ENCODE measurements at regions of chr13 and their contacts with region 1.

Region 1: DNA sequence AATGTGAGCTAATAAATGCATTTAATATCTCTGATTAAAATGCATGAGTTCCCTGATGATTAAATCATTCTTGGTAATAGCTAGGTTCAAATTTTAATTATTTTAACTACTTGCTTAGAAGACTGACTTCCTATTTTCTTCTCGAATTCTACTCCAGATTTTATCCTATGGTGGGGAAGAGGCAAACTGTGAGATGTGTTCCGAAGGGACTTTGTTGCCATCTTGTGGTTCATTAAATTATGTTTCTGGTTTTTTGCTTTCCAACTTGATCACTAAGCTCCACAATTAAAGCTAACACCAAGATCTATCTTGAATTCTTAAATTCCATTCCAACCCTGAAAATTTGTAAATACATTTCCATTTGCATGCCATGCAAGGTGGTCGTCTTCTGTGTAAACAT is 538.4 kb upstream of the PCDH20 start:
- DNase-seq: no peak
- H3K4me3 ChIP-seq: no peak overlapping the region
- H3K27ac ChIP-seq: no peak overlapping the region
- H3K4me1 ChIP-seq: no peaks in the 10 kb centered on the region
- H3K27me3 ChIP-seq: no peaks in the 10 kb centered on the region
- CTCF ChIP-seq: peak in 2 of 4 experiments; percentile 12 to 18
- EP300 ChIP-seq: no peak
- POLR2A ChIP-seq: no peak

Region 2: DNA sequence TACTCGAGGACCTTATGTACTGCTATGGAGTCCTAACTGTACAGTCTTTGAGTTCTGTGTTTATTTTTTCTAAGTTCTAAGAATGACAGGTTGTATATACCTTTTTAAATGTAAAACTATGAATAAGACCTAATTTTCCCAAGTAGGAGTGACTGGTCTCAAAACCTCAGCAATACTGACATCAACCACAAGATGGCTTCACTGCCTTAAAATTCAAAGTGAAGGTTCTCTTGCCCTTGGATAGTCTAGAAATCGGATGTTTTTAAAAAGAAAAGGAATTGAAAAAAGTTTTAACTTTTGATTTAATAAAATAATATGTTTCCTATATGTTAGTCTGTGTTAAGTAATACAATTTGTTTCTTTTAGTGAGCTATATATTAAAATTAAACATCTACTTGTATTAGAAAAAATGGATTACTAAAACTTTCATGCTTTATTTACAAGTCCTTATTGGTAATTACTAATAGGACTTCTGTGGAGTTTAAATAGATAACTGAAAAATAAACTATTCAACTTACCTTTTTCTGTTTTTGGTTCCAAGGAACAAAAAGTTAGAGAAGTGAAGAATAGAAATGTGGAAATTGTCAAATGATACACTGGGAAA is 1505.1 kb before region 1 on chr13:
- intact Hi-C with region 1: loop called (anchors 10 kb)
- DNase-seq: no peak
- H3K4me3 ChIP-seq: no peak overlapping the region
- H3K27ac ChIP-seq: no peak overlapping the region
- H3K4me1 ChIP-seq: peaks cover 0 to 8% (median 3%) of the 10 kb centered on the region in 4 donors
- H3K27me3 ChIP-seq: no peaks in the 10 kb centered on the region
- CTCF ChIP-seq: peak in 3 of 4 experiments; percentile 61 to 69 (median 65)
- EP300 ChIP-seq: no peak
- POLR2A ChIP-seq: no peak